SK-N-SH (cell line): ENCODE measurements at regions of chr7 and their contacts with region 1.

Region 1: DNA sequence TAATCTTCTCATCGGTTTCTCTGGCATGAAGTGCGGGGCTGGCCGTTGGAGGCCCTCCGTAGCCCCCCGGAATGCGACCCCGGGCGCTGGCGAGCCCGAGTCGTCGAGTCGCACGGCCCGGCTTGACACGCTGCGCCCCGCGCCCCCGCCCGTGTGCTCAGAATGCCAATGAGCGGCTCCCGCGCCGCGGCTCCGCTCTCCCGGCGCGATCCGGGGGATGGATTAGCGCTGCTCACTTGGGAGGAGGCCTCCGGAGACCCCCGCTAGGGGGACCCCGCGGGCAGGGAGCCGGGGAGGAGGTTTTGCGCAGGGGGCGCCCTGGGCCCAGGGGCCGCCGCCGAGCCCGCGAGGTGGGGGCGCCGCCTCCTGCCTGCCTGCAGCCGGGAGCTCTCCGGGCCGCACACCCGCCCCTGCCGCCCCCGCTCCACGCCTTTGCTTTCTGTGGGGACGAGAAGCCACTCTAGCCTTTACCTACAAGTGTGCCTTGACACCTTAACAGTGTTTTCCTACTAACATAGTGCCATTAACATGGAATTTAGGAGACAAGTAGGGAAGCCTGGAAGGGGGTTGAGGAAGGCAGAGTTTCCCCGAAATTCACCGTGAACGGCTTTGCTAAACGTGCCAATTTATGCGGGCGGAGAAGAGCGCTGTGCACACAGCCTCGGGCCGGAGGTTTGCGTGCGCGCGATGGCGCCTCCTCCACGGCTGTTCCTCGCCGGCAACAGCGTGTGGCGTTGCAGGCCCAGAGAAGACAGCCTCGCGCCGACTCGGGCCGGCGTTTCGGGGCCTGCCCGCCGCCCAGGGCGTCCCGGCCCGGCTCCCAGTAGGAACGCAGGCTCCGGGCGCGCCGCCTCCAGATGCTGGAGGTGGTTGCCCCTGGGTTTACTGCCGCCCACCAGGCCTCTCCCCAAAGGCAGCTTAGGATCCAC is 7.1 kb downstream of the SHH start:
- DNase-seq: peak; percentile 99
- H3K4me3 ChIP-seq: peak overlapping the region; percentile 28 to 59
- H3K27ac ChIP-seq: no peak overlapping the region
- H3K4me1 ChIP-seq: peaks cover 0 to 16% of the 10 kb centered on the region in 2 experiments; a peak in 2 of 4 replicates
- H3K27me3 ChIP-seq: peaks cover 93% of the 10 kb centered on the region
- CTCF ChIP-seq: peak; percentile 84
- EP300 ChIP-seq: no peak
- RAD21 ChIP-seq: peak; percentile 61

Region 2: GRCh38 chr7:155815332-155816191 is 10.4 kb after region 1 on chr7:
- CTCF ChIA-PET with region 1: interaction called, 33 read pairs
- POLR2A ChIA-PET with region 1: no interaction called
- DNase-seq: peak; percentile 77
- H3K4me3 ChIP-seq: 0 out of 4 replicates have a peak overlapping the region, but pooled peaks of 1 of the 2 experiments have one; percentile 34
- H3K27ac ChIP-seq: no peak overlapping the region
- H3K4me1 ChIP-seq: no peaks in the 10 kb centered on the region
- H3K27me3 ChIP-seq: peaks cover 94% of the 10 kb centered on the region
- CTCF ChIP-seq: peak; percentile 72
- EP300 ChIP-seq: no peak
- RAD21 ChIP-seq: peak; percentile 78

Region 3: GRCh38 chr7:155848691-155849659 is 43.8 kb after region 1 on chr7:
- CTCF ChIA-PET with region 1: no interaction called
- POLR2A ChIA-PET with region 1: no interaction called
- DNase-seq: no peak
- H3K4me3 ChIP-seq: no peak overlapping the region
- H3K27ac ChIP-seq: no peak overlapping the region
- H3K4me1 ChIP-seq: no peaks in the 10 kb centered on the region
- H3K27me3 ChIP-seq: peaks cover 92% of the 10 kb centered on the region
- CTCF ChIP-seq: no peak
- EP300 ChIP-seq: no peak
- RAD21 ChIP-seq: no peak

Region 4: DNA sequence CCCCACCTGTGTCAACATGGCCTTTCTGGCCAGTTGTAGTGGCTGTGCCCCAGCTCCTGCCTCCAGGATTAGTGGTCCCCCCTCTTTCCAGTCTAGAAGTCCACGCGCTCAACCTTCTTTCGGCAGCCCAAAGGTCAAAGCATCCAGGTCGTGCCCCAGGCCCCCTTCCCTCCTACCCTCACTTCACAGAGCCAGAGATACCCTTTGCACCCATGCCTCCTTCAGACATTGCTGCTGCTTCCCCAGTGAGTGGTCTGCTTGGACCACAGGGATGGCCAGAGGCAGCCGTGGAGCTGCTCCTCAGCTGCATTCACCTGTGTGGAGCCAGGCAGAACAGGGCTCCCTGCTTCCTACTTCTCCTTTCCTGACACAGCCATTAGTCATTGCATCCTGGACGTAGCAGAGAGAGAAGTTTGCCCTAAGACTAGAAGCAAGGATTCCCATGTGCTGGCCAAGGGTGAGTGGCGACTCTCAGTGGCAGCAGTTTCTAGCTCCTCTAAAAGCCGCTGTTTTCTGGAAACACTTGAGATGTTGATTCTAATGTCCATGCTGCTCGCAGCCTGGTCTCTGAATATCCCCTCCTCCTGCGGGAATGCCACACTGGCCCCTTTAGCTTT is 250.2 kb after region 1 on chr7:
- CTCF ChIA-PET with region 1: no interaction called
- POLR2A ChIA-PET with region 1: no interaction called
- DNase-seq: no peak
- H3K4me3 ChIP-seq: no peak overlapping the region
- H3K27ac ChIP-seq: no peak overlapping the region
- H3K4me1 ChIP-seq: no peaks in the 10 kb centered on the region
- H3K27me3 ChIP-seq: peaks cover 64% of the 10 kb centered on the region
- CTCF ChIP-seq: no peak
- EP300 ChIP-seq: no peak
- RAD21 ChIP-seq: no peak

Region 5: GRCh38 chr7:156827587-156828203 is 1022.5 kb after region 1 on chr7:
- CTCF ChIA-PET with region 1: interaction called, 13 read pairs
- POLR2A ChIA-PET with region 1: no interaction called
- DNase-seq: peak; percentile 41
- H3K4me3 ChIP-seq: no peak overlapping the region
- H3K27ac ChIP-seq: no peak overlapping the region
- H3K4me1 ChIP-seq: no peaks in the 10 kb centered on the region
- H3K27me3 ChIP-seq: no peaks in the 10 kb centered on the region
- CTCF ChIP-seq: peak; percentile 70
- EP300 ChIP-seq: no peak
- RAD21 ChIP-seq: peak; percentile 81